Heart right ventricle (tissue), 16 donors: ENCODE measurements at regions of chr18 and their contacts with region 1.

Region 1: GRCh38 chr18:55136864-55137263 is 177.6 kb upstream of the CCDC68 start:
- DNase-seq: no peak
- ATAC-seq: no peak
- H3K4me3 ChIP-seq: no peak overlapping the region
- H3K27ac ChIP-seq: no peak overlapping the region
- H3K4me1 ChIP-seq: no peaks in the 10 kb centered on the region
- H3K27me3 ChIP-seq: no peaks in the 10 kb centered on the region
- CTCF ChIP-seq: no peak

Region 2: GRCh38 chr18:55214969-55215368 is 78.1 kb after region 1 on chr18:
- intact Hi-C with region 1: loop called in 1 of 10 experiments (anchors 10 kb)
- DNase-seq: no peak
- ATAC-seq: no peak
- H3K4me3 ChIP-seq: no peak overlapping the region
- H3K27ac ChIP-seq: no peak overlapping the region
- H3K4me1 ChIP-seq: peaks cover 0 to 10% (median 3%) of the 10 kb centered on the region in 9 donors
- H3K27me3 ChIP-seq: no peaks in the 10 kb centered on the region
- CTCF ChIP-seq: no peak